CD8-positive, alpha-beta memory T cell (primary cell): ENCODE measurements at regions of chr17 and their contacts with region 1.

Region 1: DNA sequence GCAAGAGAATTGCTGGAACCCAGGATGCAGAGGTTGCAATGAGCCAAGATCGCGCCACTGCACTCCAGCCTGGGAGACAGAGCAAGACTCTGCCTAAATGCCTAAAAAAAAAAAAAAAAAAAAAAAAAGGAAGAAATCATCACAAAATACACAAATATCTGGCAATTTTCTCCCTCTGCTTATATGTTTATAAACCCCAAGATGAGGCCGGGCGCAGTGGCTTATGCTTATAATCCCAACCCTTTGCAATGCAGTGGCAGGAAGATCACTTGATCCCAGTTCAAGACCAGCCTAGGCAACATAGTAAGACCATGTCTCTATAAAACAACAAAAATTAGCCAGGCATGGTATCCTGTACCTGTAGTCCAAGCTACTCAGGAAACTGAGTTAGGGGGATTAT is 21.5 kb downstream of the MED1 start:
- DNase-seq: no peak
- H3K4me3 ChIP-seq: no peak overlapping the region
- H3K4me3 Mint-ChIP-seq: no peak overlapping the region
- H3K27ac ChIP-seq: no peak overlapping the region
- H3K27ac Mint-ChIP-seq: no peak overlapping the region
- H3K4me1 ChIP-seq: no peaks in the 10 kb centered on the region
- H3K4me1 Mint-ChIP-seq: peaks cover 0 to 4% (median 2%) of the 10 kb centered on the region in 3 donors
- H3K27me3 ChIP-seq: no peaks in the 10 kb centered on the region
- H3K27me3 Mint-ChIP-seq: no peaks in the 10 kb centered on the region

Region 2: GRCh38 chr17:40068917-40069750 is 639.5 kb after region 1 on chr17:
- CTCF ChIA-PET with region 1: no interaction called
- POLR2A ChIA-PET with region 1: interaction called, 10 read pairs
- DNase-seq: peak; percentile 55 to 86 (median 66)
- H3K4me3 ChIP-seq: peak overlapping the region; percentile 68
- H3K4me3 Mint-ChIP-seq: peak overlapping the region; percentile 81 to 91 (median 88)
- H3K27ac ChIP-seq: peak overlapping the region; percentile 58
- H3K27ac Mint-ChIP-seq: peak overlapping the region; percentile 88 to 98 (median 96)
- H3K4me1 ChIP-seq: peaks cover 82% of the 10 kb centered on the region
- H3K4me1 Mint-ChIP-seq: peaks cover 62 to 86% (median 69%) of the 10 kb centered on the region in 3 donors
- H3K27me3 ChIP-seq: no peaks in the 10 kb centered on the region
- H3K27me3 Mint-ChIP-seq: no peaks in the 10 kb centered on the region